B cell (primary cell): ENCODE measurements at regions of chr5 and their contacts with region 1.

Region 1: DNA sequence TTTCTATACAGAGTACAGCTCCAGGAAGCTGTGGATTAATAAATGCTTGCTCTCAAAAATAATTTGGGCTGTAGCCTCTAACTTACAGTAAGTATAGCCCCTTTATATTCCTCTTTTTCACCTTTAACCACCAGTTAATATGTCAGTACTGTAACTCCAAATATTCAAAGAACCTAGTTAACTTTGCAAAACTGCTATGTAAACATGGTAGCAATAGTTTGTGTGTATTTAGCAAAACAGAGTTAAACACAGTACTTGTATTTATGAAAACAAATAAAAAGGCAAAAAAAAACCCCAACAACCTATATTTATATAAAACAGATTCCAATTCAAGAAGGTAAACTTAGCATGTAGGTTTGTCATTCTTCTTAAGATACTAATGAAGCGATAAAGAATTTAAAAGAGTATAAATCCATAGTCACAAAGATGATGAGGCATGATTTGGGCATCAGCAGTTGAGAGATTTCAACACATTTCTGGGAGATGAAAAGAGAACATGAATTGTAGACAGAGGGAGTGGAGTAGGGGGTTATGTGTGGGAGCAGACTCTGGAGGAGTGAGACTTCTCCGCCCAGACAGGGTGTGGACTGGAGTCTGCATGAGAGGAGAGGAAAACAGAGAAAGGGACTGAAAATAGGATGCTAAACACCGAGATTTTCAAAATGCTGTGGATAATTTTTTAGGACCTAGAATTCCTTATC is 47.0 kb upstream of the F2RL1 start:
- DNase-seq: no peak
- ATAC-seq: no peak
- H3K4me3 ChIP-seq: no peak overlapping the region
- H3K4me3 Mint-ChIP-seq: no peak overlapping the region
- H3K27ac ChIP-seq: no peak overlapping the region
- H3K27ac Mint-ChIP-seq: no peak overlapping the region
- H3K4me1 ChIP-seq: peaks cover 0 to 3% of the 10 kb centered on the region in 2 donors
- H3K4me1 Mint-ChIP-seq: peaks cover 2% of the 10 kb centered on the region
- H3K27me3 ChIP-seq: no peaks in the 10 kb centered on the region
- H3K27me3 Mint-ChIP-seq: no peaks in the 10 kb centered on the region
- CTCF ChIP-seq: no peak

Region 2: DNA sequence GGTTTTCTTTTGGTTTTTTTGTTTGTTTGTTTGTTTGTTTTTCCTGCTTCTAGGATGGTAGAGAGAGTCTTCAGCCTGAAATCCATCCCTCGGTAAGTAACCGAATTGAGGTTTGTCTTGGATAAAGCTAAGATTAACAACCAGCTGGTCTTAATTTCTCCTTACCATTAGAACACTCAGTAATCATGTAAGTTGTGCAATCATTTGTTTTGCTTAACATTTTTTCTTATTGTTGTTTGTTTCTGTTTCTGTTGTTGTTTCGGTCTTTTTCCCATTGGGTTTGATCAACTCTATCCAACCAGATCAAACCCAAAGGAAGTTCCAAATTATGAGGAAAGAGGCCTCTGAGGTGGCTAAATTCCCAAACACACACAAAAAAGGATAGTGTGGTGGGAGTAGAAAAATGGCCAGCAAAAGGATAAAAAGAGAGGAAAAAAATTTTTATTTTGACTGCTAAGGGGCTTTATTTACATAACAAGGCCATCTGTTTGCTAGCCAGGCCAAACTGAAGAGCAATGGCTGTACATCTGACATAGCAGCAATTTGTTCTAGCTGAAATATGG is 1485.6 kb before region 1 on chr5:
- CTCF ChIA-PET with region 1: no interaction called
- POLR2A ChIA-PET with region 1: no interaction called
- intact Hi-C with region 1: no loop called
- DNase-seq: no peak
- ATAC-seq: no peak
- H3K4me3 ChIP-seq: no peak overlapping the region
- H3K4me3 Mint-ChIP-seq: no peak overlapping the region
- H3K27ac ChIP-seq: no peak overlapping the region
- H3K27ac Mint-ChIP-seq: no peak overlapping the region
- H3K4me1 ChIP-seq: no peaks in the 10 kb centered on the region
- H3K4me1 Mint-ChIP-seq: no peaks in the 10 kb centered on the region
- H3K27me3 ChIP-seq: no peaks in the 10 kb centered on the region
- H3K27me3 Mint-ChIP-seq: peaks cover 9% of the 10 kb centered on the region
- CTCF ChIP-seq: no peak

Region 3: GRCh38 chr5:76601470-76601869 is 170.4 kb before region 1 on chr5:
- CTCF ChIA-PET with region 1: interaction called, 102 read pairs
- POLR2A ChIA-PET with region 1: no interaction called
- intact Hi-C with region 1: no loop called
- DNase-seq: peak; percentile 67
- ATAC-seq: peak; percentile 47
- H3K4me3 ChIP-seq: no peak overlapping the region
- H3K4me3 Mint-ChIP-seq: no peak overlapping the region
- H3K27ac ChIP-seq: no peak overlapping the region
- H3K27ac Mint-ChIP-seq: no peak overlapping the region
- H3K4me1 ChIP-seq: no peaks in the 10 kb centered on the region
- H3K4me1 Mint-ChIP-seq: no peaks in the 10 kb centered on the region
- H3K27me3 ChIP-seq: no peaks in the 10 kb centered on the region
- H3K27me3 Mint-ChIP-seq: no peaks in the 10 kb centered on the region
- CTCF ChIP-seq: peak; percentile 78

Region 4: DNA sequence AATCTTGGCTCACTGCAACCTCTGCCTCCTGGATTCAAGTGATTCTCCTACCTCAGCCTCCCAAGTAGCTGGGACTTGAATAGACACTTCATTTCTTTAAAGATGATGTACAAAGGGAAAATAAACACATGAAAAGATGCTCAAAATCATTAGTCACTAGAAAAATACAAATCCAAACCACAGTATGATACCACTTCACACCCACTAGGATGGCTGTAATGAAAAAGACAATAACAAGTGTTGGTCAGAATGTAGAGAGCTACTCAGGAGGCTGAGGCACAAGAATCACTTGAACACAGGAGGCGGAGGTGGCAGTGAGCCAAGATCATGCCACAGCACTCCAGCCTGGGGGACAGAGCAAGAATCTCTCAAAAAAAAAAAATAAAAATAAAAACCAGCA is 161.7 kb before region 1 on chr5:
- CTCF ChIA-PET with region 1: interaction called, 10 read pairs
- POLR2A ChIA-PET with region 1: no interaction called
- intact Hi-C with region 1: no loop called
- DNase-seq: no peak
- ATAC-seq: no peak
- H3K4me3 ChIP-seq: no peak overlapping the region
- H3K4me3 Mint-ChIP-seq: no peak overlapping the region
- H3K27ac ChIP-seq: no peak overlapping the region
- H3K27ac Mint-ChIP-seq: no peak overlapping the region
- H3K4me1 ChIP-seq: peaks cover 0 to 7% of the 10 kb centered on the region in 2 donors
- H3K4me1 Mint-ChIP-seq: peaks cover 9% of the 10 kb centered on the region
- H3K27me3 ChIP-seq: no peaks in the 10 kb centered on the region
- H3K27me3 Mint-ChIP-seq: no peaks in the 10 kb centered on the region
- CTCF ChIP-seq: no peak

Region 5: GRCh38 chr5:76715736-76716455 is 56.0 kb before region 1 on chr5 and contains the start of gene F2R:
- CTCF ChIA-PET with region 1: interaction called, 13 read pairs
- POLR2A ChIA-PET with region 1: no interaction called
- intact Hi-C with region 1: loop called (anchors 1 kb)
- DNase-seq: peak; percentile 52
- ATAC-seq: peak; percentile 82
- H3K4me3 ChIP-seq: peak within 1 kb of the TSS; percentile 45 to 76 (median 56)
- H3K4me3 Mint-ChIP-seq: peak within 1 kb of the TSS; percentile 88
- H3K27ac ChIP-seq: no peak within 1 kb of the TSS
- H3K27ac Mint-ChIP-seq: no peak within 1 kb of the TSS
- H3K4me1 ChIP-seq: peaks cover 25 to 27% of the 10 kb centered on the region in 2 donors
- H3K4me1 Mint-ChIP-seq: peaks cover 28% of the 10 kb centered on the region
- H3K27me3 ChIP-seq: peaks cover 0 to 42% (median 25%) of the 10 kb centered on the region in 4 experiments
- H3K27me3 Mint-ChIP-seq: peaks cover 47% of the 10 kb centered on the region
- CTCF ChIP-seq: peak; percentile 43
- total RNA-seq, gene F2R: 0.97 and 1.4 TPM in 2 replicates

Region 6: DNA sequence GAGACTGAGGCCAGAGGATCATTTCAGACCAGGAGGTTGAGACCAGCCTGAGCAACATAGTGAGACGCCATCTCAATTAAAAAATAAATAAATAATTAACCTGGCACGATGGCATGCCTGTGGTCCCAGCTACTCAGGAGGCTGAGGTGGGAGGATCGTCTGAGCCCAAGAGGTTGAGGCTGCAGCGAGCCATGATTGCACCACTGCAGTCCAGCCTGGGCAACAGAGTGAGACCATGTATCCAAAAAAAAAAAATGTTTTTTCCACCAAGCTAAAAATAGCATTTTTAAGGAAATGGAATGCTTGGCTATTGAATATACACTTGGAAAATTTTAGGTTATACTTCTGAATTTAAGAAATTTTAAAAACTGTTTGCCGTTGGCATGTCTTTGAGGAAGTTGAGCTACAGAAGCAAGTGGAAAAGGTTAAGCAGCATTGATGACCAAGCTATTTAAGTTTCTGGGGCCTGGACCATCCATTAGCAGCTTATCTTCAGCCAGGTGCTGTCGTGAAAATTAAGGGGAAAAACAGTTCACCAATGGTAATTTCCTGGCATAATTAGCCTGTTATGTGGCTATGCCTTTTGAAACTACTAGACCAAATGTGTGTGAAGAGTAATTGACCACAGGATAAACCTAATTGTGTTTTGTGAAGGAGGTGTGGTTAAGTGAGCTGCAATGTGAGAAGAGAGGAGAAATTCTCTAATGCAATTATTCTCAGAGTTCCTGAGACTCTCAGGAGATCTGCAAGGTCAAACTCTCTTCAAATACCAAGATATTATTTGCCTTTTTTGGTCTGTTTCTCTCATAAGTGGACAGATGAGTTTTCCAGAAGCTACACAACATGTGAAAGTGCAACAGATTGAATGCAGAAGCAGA is 34.9 kb before region 1 on chr5:
- CTCF ChIA-PET with region 1: interaction called, 10 read pairs
- POLR2A ChIA-PET with region 1: no interaction called
- intact Hi-C with region 1: no loop called
- DNase-seq: no peak
- ATAC-seq: no peak
- H3K4me3 ChIP-seq: no peak overlapping the region
- H3K4me3 Mint-ChIP-seq: no peak overlapping the region
- H3K27ac ChIP-seq: no peak overlapping the region
- H3K27ac Mint-ChIP-seq: no peak overlapping the region
- H3K4me1 ChIP-seq: peaks cover 0 to 13% of the 10 kb centered on the region in 2 donors
- H3K4me1 Mint-ChIP-seq: peaks cover 19% of the 10 kb centered on the region
- H3K27me3 ChIP-seq: peaks cover 0 to 2% (median 1%) of the 10 kb centered on the region in 4 experiments
- H3K27me3 Mint-ChIP-seq: peaks cover 15% of the 10 kb centered on the region
- CTCF ChIP-seq: no peak